Panc1 (cell line): ENCODE measurements at regions of chr6 and their contacts with region 1.

Region 1: DNA sequence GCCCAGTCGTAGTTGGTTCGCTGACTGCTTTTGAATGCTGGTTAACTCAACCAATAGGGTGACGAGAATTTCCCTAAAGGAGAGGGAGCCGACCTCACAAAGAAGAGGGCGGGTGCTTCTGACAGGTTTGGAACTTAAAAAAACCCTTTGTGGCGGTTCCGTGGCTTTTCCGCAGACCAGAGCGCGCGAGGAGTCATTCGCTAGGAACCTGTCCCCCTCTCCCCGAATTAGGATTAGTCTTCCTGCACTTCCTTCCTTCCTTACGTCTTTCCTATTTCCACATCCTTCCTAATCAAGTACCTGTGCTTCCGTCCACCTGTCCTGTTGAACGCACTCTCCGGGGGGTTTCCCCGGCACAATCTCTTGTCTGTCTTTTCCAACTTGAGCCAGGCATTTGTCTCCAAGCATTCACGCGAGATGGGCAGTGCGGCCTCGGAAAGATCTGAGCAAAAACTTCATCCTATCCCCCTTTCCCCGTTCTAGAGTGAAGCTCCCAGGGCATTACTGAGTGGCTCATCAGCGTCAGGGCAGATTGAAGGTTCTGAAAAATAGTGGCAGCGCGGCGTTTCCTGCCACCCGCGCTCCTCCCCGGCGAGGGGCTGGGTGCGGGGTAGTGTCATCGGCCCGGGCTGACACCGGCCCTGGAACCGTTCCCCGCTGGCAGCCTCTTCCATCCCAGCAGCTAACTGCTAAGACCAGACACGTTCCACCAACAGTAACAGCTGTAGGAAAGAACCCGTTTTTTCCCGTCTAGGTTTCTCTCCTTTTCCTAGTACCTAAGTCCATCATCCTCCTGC is 1.5 kb upstream of the STXBP5 start:
- DNase-seq: peak; percentile 89
- ATAC-seq: peak; percentile 91
- H3K4me3 ChIP-seq: peak overlapping the region; percentile 92 to 95
- H3K27ac ChIP-seq: peak overlapping the region; percentile 99
- H3K4me1 ChIP-seq: peaks cover 11% of the 10 kb centered on the region
- H3K27me3 ChIP-seq: no peaks in the 10 kb centered on the region
- CTCF ChIP-seq: no peak

Region 2: GRCh38 chr6:146543211-146543939 is 659.3 kb before region 1 on chr6 and contains the start of gene RAB32:
- CTCF ChIA-PET with region 1: no interaction called
- POLR2A ChIA-PET with region 1: no interaction called
- in situ Hi-C with region 1: no loop called
- intact Hi-C with region 1: no loop called
- DNase-seq: no peak
- ATAC-seq: peak; percentile 99
- H3K4me3 ChIP-seq: peak within 1 kb of the TSS; percentile 89 to 95
- H3K27ac ChIP-seq: peak within 1 kb of the TSS; percentile 92
- H3K4me1 ChIP-seq: peaks cover 14% of the 10 kb centered on the region
- H3K27me3 ChIP-seq: no peaks in the 10 kb centered on the region
- CTCF ChIP-seq: peak; percentile 86
- total RNA-seq, gene RAB32: 61.5 TPM

Region 3: GRCh38 chr6:146905181-146905704 is 297.5 kb before region 1 on chr6:
- CTCF ChIA-PET with region 1: no interaction called
- POLR2A ChIA-PET with region 1: no interaction called
- in situ Hi-C with region 1: no loop called
- intact Hi-C with region 1: loop called (anchors 2 kb)
- DNase-seq: no peak
- ATAC-seq: peak; percentile 97
- H3K4me3 ChIP-seq: no peak overlapping the region
- H3K27ac ChIP-seq: peak overlapping the region; percentile 99
- H3K4me1 ChIP-seq: peaks cover 33% of the 10 kb centered on the region
- H3K27me3 ChIP-seq: no peaks in the 10 kb centered on the region
- CTCF ChIP-seq: no peak

Region 4: GRCh38 chr6:146913842-146914488 is 288.7 kb before region 1 on chr6:
- CTCF ChIA-PET with region 1: no interaction called
- POLR2A ChIA-PET with region 1: no interaction called
- in situ Hi-C with region 1: no loop called
- intact Hi-C with region 1: loop called (anchors 2 kb)
- DNase-seq: peak; percentile 88
- ATAC-seq: peak; percentile 92
- H3K4me3 ChIP-seq: peak overlapping the region; percentile 22 to 54
- H3K27ac ChIP-seq: peak overlapping the region; percentile 99
- H3K4me1 ChIP-seq: peaks cover 44% of the 10 kb centered on the region
- H3K27me3 ChIP-seq: no peaks in the 10 kb centered on the region
- CTCF ChIP-seq: no peak

Region 5: GRCh38 chr6:147366290-147366689 is 163.6 kb after region 1 on chr6:
- CTCF ChIA-PET with region 1: no interaction called
- POLR2A ChIA-PET with region 1: no interaction called
- in situ Hi-C with region 1: no loop called
- intact Hi-C with region 1: no loop called
- DNase-seq: no peak
- ATAC-seq: no peak
- H3K4me3 ChIP-seq: no peak overlapping the region
- H3K27ac ChIP-seq: no peak overlapping the region
- H3K4me1 ChIP-seq: no peaks in the 10 kb centered on the region
- H3K27me3 ChIP-seq: no peaks in the 10 kb centered on the region
- CTCF ChIP-seq: 0 out of 2 replicates have a peak, but pooled peaks have one; percentile 14

Region 6: DNA sequence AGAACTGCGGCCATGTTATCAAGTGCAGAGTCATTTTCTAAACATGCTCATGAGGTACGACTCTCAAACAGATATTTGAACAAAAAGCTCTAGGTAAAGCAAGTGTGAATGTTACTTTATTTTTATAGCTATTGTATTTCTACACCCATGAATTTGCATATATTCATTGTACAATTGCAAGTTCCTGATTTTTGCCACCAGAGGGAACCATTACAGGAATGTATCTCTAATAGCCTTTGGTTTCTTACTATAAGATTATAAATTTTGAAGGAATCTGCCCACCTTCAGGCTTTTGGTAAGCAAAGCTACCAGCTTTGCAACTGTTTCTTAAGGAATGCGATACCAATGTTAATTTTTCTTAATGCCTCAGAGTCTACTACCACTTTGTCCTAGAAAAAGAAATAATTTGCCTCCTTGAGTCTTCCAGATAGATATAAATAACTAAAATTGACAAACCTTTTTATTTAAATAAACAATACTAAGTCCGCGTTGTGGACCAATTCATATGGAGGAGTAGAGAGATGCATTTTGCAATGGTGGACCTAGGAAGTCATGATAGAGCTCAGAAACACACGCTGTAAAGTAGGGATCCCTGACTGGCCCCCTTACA is 180.3 kb after region 1 on chr6:
- CTCF ChIA-PET with region 1: no interaction called
- POLR2A ChIA-PET with region 1: interaction called, 10 read pairs
- in situ Hi-C with region 1: no loop called
- intact Hi-C with region 1: no loop called
- DNase-seq: no peak
- ATAC-seq: 0 out of 2 replicates have a peak, but pooled peaks have one; percentile 56
- H3K4me3 ChIP-seq: no peak overlapping the region
- H3K27ac ChIP-seq: no peak overlapping the region
- H3K4me1 ChIP-seq: peaks cover 4% of the 10 kb centered on the region; the same call in 1 of the 2 replicates
- H3K27me3 ChIP-seq: no peaks in the 10 kb centered on the region
- CTCF ChIP-seq: peak; percentile 67